Activated naive CD4-positive, alpha-beta T cell treated with anti-CD3 and anti-CD28 coated beads for 36 hours (primary cell): ENCODE measurements at regions of chr21 and their contacts with region 1.

Region 1: GRCh38 chr21:37072988-37073416 is at the starts of genes PIGP and TTC3:
- DNase-seq: peak; percentile 94
- H3K4me3 Mint-ChIP-seq: peak within 1 kb of the TSS; percentile 88
- H3K27ac Mint-ChIP-seq: peak within 1 kb of the TSS; percentile 86
- H3K4me1 Mint-ChIP-seq: peaks cover 42% of the 10 kb centered on the region
- H3K27me3 Mint-ChIP-seq: no peaks in the 10 kb centered on the region
- total RNA-seq, gene PIGP: 12.0 to 16.9 TPM
- total RNA-seq, gene TTC3: 53.7 to 53.8 TPM

Region 2: DNA sequence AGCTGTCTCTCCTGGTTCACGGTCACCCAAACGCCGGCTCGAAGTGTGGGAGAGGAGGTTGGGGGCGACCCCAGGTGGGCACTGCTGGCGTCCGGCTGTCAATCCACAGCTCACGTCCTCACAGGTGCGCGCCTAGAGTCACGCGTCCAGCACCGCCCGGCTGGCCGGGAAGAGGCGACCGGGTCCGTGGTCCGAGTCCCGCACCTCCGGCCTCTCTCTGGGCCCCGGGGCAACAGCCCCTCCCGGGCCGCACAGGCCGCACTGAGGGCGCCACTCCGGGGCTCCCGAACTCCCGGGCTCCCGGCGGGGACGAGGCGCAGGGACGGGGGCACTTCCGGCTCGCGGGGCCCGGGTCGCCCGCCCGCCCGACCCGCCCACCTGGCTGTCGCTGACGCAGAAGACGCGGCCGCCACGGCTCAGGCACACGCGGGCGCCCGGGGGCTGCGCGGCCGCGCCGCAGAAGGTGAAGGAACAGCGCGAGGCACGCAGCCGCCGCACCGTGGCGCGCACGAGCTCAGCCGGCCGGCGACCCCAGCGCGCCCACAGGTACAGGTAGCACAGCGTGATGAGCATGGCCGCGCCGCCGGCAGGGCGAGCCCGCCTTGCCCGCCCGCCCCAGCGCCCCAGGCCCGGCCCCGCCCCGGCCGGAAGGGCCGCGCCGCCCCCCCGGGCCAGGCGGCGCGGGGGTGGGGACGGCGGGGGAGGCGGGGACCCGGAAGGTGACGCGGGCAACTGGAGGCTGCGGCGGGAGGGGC is 106.8 kb before region 1 on chr21 and contains the start of gene HLCS:
- CTCF ChIA-PET with region 1: no interaction called
- intact Hi-C with region 1: loop called (anchors 2 kb)
- DNase-seq: peak; percentile 72
- H3K4me3 Mint-ChIP-seq: peak within 1 kb of the TSS; percentile 78
- H3K27ac Mint-ChIP-seq: peak within 1 kb of the TSS; percentile 86
- H3K4me1 Mint-ChIP-seq: peaks cover 12% of the 10 kb centered on the region
- H3K27me3 Mint-ChIP-seq: no peaks in the 10 kb centered on the region
- total RNA-seq, gene HLCS: 12.5 to 12.6 TPM

Region 3: DNA sequence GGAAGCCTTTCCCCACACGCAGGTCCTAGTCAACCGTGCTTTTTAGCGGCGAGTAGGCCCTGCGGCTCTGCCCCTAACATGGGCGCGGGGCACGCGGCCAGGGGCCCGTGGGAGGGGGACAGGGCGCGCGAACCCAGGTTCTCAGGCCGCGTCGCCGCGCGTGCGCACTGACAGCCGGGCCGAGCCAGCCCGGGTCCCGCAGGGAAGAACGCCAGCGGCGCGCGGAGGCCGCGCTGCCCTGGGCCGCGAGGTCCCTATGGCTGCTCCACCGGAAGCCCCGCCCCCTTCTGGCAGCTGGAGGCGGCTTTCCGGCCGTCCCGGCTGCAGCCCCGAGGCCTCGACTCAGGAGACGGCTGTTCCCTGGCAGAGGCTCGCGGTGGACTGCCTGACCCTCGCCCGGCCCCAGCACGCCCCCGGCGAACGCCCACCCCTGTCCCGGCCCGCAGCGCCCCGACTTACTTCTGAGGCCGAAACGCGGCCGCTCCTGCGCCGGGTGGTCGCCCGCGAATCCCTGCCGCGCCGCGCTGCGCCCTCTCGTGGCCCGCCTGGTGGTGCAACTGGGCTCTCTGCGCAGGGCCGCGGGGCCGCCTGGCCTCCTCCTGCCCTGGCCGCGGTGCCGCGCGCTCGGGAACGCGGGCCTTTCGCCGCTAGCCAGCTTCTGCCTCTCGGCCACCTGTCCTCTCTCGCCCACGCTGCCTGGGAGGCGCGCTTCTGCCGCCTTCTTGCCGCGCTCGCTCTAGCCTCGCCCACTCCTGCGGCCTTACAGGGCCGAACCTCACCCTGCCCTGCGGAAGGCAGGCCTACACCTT is 83.1 kb before region 1 on chr21:
- CTCF ChIA-PET with region 1: no interaction called
- intact Hi-C with region 1: loop called (anchors 1 kb)
- DNase-seq: peak; percentile 89
- H3K4me3 Mint-ChIP-seq: peak overlapping the region; percentile 80
- H3K27ac Mint-ChIP-seq: peak overlapping the region; percentile 65
- H3K4me1 Mint-ChIP-seq: peaks cover 38% of the 10 kb centered on the region
- H3K27me3 Mint-ChIP-seq: no peaks in the 10 kb centered on the region

Region 4: DNA sequence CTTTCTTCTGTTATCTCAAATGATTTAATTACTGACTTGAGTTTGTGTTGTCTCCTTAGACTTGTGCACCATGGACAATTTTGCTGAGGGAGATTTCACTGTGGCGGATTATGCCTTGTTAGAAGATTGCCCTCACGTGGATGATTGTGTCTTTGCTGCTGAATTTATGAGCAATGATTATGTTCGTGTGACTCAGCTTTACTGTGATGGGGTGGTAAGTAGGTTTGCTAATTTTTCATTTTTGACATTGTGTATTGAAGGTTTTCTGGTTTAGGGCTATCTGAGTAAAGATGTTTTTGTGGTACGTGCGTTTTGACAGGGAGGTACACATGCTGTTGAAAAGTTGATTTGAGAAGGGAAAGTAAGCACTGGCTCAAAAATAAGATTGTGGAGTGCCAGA is 14.2 kb after region 1 on chr21:
- CTCF ChIA-PET with region 1: interaction called, 3 read pairs
- intact Hi-C with region 1: loop called (anchors 2 kb)
- DNase-seq: peak; percentile 17
- H3K4me3 Mint-ChIP-seq: no peak overlapping the region
- H3K27ac Mint-ChIP-seq: no peak overlapping the region
- H3K4me1 Mint-ChIP-seq: peaks cover 14% of the 10 kb centered on the region
- H3K27me3 Mint-ChIP-seq: no peaks in the 10 kb centered on the region

Region 5: GRCh38 chr21:37176711-37177110 is 103.7 kb after region 1 on chr21:
- CTCF ChIA-PET with region 1: no interaction called
- intact Hi-C with region 1: no loop called
- DNase-seq: no peak
- H3K4me3 Mint-ChIP-seq: no peak overlapping the region
- H3K27ac Mint-ChIP-seq: no peak overlapping the region
- H3K4me1 Mint-ChIP-seq: no peaks in the 10 kb centered on the region
- H3K27me3 Mint-ChIP-seq: no peaks in the 10 kb centered on the region

Region 6: DNA sequence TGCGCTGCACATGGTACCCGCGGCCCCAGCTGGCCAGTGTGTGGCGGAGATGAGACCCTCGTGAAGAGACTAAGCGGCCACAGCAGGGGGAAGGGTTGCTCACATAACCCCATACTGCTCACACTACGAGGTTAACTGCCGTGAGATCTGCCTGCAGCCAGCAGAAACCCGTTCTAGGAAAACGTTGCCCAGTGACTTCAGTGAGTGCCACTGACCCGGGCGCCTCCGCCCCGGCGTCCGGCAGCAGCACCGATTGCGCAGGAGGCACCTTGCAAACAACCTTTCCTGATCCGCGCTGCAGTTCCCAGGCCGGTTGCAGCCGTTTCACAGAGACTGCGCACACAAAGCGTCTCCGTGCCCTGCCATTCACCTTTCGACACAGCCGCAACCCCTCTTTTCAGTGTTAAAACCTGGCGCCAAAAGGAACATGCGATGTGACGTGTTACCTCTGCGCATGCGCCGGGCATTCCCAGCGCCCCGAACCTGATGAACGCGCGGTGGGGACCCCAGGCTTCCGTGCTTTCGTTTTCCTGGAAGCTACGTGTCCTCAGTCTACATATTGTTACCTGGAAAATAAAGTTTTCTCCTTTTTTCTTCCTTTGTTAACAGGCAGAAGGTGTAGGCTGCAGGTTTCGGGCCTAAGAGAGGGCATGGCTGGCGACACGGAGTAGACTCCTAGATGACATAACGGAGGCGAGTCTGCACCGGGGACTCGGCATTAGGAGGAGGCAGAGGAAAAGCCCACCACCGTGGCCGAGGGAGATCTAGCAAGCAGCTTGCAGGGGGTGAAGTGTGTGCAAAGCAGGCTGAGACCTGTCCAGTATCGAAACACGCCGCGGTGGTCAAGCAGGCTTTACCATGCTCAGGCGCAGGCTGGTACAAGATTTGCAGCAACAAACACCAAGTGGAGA is 185.2 kb after region 1 on chr21:
- CTCF ChIA-PET with region 1: no interaction called
- intact Hi-C with region 1: loop called (anchors 2 kb)
- DNase-seq: peak; percentile 88
- H3K4me3 Mint-ChIP-seq: peak overlapping the region; percentile 77
- H3K27ac Mint-ChIP-seq: peak overlapping the region; percentile 91
- H3K4me1 Mint-ChIP-seq: peaks cover 25% of the 10 kb centered on the region
- H3K27me3 Mint-ChIP-seq: no peaks in the 10 kb centered on the region

Region 7: DNA sequence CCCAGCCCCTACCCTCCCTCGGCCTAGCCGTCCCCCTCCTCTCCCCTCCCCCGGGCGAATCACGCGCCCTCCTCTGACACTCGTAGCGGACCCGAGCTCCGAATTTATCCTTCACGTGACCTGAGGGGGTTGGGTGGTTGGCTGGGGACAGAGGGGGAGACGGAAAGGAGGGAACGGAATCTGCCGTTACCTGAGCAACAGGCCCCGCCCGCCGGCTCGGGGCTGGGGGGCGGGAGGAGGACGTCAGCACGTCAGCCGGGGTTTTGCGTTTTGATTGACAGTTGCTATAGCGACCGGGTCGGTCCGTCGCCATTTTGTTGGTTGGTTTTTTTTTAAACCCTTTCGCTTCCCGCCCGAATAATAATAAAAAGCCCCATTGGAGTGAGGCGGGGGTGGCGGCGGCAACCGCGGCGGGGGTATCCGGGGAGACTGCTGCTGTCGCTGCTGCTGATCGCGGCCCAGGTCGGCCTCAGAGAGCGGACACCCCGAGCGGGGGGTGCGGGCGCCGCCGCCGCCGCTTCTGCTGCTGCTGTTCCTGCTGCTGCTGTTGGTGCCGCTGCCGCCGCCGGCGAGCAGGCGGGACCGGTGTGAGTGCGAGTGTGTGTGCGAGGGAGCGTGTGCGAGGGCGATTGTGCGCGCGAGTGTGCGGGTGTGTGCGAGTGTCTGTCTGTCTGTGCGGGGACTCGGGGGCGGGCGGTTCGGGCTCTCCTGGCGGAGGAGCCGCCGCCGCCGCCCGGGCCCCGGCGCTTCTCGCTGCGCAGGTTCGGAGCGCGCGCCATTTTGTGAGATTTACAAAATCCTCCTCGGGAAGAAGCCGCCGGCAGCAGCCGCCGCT is 293.7 kb after region 1 on chr21 and contains the start of gene DYRK1A:
- CTCF ChIA-PET with region 1: no interaction called
- intact Hi-C with region 1: loop called (anchors 2 kb)
- DNase-seq: peak; percentile 99
- H3K4me3 Mint-ChIP-seq: peak within 1 kb of the TSS; percentile 99
- H3K27ac Mint-ChIP-seq: peak within 1 kb of the TSS; percentile 100
- H3K4me1 Mint-ChIP-seq: peaks cover 34% of the 10 kb centered on the region
- H3K27me3 Mint-ChIP-seq: no peaks in the 10 kb centered on the region
- total RNA-seq, gene DYRK1A: 49.8 to 51.4 TPM